Naive thymus-derived CD4-positive, alpha-beta T cell (primary cell): ENCODE measurements at regions of chr15 and their contacts with region 1.

Region 1: DNA sequence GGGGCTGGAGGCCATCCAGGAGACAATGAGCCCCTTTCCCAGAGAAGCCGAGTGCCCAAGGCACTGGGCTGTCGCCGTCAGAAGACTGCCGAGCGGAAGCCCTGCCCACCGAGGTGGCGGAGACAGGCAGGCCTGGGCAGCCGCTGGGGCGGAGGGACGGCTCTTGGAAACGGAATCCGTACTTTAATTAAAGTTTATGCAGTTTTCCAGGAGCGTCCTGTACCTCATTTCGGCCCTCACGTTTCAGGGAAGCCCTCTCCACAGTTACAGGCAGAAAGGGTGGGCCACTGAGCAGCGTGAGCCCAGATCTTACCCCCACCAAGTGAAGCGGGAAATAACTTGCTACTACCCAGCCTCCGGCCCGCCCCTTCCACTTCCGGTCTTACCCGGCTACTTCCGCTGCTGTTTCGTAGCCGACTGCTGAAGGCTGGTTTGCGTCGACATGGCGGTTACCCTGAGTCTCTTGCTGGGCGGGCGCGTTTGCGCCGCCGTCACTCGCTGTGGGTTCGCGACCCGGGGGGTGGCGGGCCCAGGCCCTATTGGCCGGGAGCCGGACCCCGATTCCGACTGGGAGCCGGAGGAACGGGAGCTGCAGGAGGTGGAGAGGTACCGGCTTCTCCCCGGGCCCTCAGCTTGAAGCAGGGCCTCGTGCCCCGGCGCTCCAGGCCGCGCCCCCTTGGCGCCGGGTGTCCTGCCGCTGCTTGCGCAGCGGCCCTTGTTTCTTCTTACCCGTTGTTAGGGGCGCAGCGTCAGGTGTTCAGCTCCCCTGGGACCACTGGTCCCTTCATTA is at the start of gene NGRN:
- DNase-seq: peak; percentile 81 to 96 (median 93)
- ATAC-seq: peak; percentile 94
- H3K4me3 ChIP-seq: peak within 1 kb of the TSS; percentile 84
- H3K4me3 Mint-ChIP-seq: peak within 1 kb of the TSS; percentile 95 to 99 (median 97)
- H3K27ac ChIP-seq: peak within 1 kb of the TSS; percentile 96
- H3K27ac Mint-ChIP-seq: peak within 1 kb of the TSS; percentile 98 to 100 (median 99)
- H3K4me1 ChIP-seq: peaks cover 36 to 40% of the 10 kb centered on the region in 2 donors
- H3K4me1 Mint-ChIP-seq: peaks cover 22 to 60% (median 48%) of the 10 kb centered on the region in 7 donors
- H3K27me3 ChIP-seq: no peaks in the 10 kb centered on the region
- H3K27me3 Mint-ChIP-seq: no peaks in the 10 kb centered on the region
- total RNA-seq, gene NGRN: 34.1 to 51.5 (median 48.4) TPM

Region 2: DNA sequence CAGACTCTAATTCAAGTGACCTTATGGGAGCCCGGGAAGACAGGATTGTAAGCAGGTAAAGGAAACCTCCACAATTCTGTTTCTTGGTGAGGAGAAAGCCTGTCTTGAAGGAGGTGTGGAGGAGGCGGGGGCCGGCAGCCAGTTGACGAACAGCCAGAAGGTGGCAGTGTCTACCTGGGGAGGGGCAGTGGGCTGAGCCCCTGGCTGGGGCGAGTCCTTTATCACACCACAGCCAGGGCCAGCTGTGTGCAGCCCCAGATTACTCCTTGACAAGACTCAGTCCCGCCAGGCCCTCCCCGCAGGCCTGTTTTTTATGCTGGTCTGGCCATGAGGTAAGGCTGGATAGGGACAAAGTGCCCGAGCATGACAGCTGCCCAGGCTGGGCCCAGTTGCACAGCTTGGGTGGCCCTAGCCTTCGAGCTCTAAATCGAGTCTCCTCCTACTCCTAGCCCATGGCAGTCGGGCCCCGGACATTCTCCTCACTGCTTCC is 122.3 kb before region 1 on chr15:
- CTCF ChIA-PET with region 1: no interaction called
- POLR2A ChIA-PET with region 1: no interaction called
- intact Hi-C with region 1: loop called in 1 of 2 experiments (anchors 2 kb)
- DNase-seq: peak; percentile 50 to 67 (median 58)
- ATAC-seq: peak; percentile 88
- H3K4me3 ChIP-seq: peak overlapping the region; percentile 9
- H3K4me3 Mint-ChIP-seq: peak overlapping the region; percentile 49 to 77 (median 67)
- H3K27ac ChIP-seq: no peak overlapping the region
- H3K27ac Mint-ChIP-seq: peak overlapping the region in 8 of 9 donors; percentile 37 to 92 (median 79)
- H3K4me1 ChIP-seq: peaks cover 0 to 4% of the 10 kb centered on the region in 2 donors
- H3K4me1 Mint-ChIP-seq: peaks cover 6 to 36% (median 26%) of the 10 kb centered on the region in 7 donors
- H3K27me3 ChIP-seq: no peaks in the 10 kb centered on the region
- H3K27me3 Mint-ChIP-seq: peaks cover 0 to 2% (median 0%) of the 10 kb centered on the region in 5 donors

Region 3: DNA sequence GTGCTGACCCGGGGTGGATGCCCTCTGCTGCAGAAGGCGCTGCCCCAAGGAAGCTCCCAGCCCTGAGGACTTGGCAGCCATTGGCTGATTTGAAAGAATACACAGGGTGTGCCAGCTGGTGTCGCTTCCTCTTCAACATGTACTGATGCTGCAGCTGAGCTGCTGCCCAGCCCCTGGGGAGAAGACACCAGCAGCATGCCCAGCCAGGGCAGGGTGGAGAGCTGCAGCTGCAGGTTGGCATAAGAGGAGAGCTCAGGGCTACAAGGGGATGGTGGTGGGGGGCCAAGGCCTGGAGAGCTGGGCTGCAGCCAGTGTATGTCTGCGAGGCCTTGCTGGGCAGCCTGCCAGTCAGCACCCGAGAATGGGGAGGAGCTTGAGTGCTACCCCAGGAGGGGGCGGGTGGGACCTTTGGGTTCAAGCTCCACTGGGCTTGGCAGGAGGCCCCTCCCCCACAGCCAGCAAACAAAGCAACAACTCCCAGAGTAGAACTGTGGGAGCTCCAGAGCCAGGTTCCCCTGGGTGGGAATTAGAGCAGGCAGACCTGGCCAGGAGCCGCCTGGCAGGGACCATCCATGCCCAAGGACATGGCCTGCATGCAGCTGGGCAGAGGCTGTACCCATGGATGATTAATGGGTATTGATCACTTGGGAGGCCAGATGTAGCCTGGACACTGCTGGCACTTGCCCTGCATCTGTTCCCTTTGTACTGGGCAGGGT is 73.5 kb before region 1 on chr15:
- CTCF ChIA-PET with region 1: interaction called, 5 read pairs
- POLR2A ChIA-PET with region 1: interaction called, 3 read pairs
- intact Hi-C with region 1: loop called in 1 of 2 experiments (anchors 2 kb)
- DNase-seq: peak; percentile 17 to 56 (median 53)
- ATAC-seq: peak; percentile 83
- H3K4me3 ChIP-seq: no peak overlapping the region
- H3K4me3 Mint-ChIP-seq: peak overlapping the region; percentile 78 to 88 (median 82)
- H3K27ac ChIP-seq: peak overlapping the region; percentile 9
- H3K27ac Mint-ChIP-seq: peak overlapping the region; percentile 75 to 95 (median 85)
- H3K4me1 ChIP-seq: peaks cover 7 to 21% of the 10 kb centered on the region in 2 donors
- H3K4me1 Mint-ChIP-seq: peaks cover 22 to 54% (median 31%) of the 10 kb centered on the region in 7 donors
- H3K27me3 ChIP-seq: no peaks in the 10 kb centered on the region
- H3K27me3 Mint-ChIP-seq: no peaks in the 10 kb centered on the region

Region 4: GRCh38 chr15:90201130-90201949 is 64.1 kb before region 1 on chr15 and contains the start of gene SEMA4B:
- CTCF ChIA-PET with region 1: no interaction called
- POLR2A ChIA-PET with region 1: interaction called, 14 read pairs
- intact Hi-C with region 1: loop called in 1 of 2 experiments (anchors 1 kb)
- DNase-seq: peak; percentile 56 to 81 (median 70)
- ATAC-seq: peak; percentile 92
- H3K4me3 ChIP-seq: peak within 1 kb of the TSS; percentile 67
- H3K4me3 Mint-ChIP-seq: peak within 1 kb of the TSS; percentile 84 to 96 (median 89)
- H3K27ac ChIP-seq: peak within 1 kb of the TSS; percentile 85
- H3K27ac Mint-ChIP-seq: peak within 1 kb of the TSS; percentile 66 to 90 (median 82)
- H3K4me1 ChIP-seq: peaks cover 11 to 23% of the 10 kb centered on the region in 2 donors
- H3K4me1 Mint-ChIP-seq: peaks cover 21 to 36% (median 25%) of the 10 kb centered on the region in 7 donors
- H3K27me3 ChIP-seq: no peaks in the 10 kb centered on the region
- H3K27me3 Mint-ChIP-seq: peaks cover 0 to 3% (median 0%) of the 10 kb centered on the region in 5 donors
- total RNA-seq, gene SEMA4B: 15.9 to 31.0 (median 20.7) TPM

Region 5: DNA sequence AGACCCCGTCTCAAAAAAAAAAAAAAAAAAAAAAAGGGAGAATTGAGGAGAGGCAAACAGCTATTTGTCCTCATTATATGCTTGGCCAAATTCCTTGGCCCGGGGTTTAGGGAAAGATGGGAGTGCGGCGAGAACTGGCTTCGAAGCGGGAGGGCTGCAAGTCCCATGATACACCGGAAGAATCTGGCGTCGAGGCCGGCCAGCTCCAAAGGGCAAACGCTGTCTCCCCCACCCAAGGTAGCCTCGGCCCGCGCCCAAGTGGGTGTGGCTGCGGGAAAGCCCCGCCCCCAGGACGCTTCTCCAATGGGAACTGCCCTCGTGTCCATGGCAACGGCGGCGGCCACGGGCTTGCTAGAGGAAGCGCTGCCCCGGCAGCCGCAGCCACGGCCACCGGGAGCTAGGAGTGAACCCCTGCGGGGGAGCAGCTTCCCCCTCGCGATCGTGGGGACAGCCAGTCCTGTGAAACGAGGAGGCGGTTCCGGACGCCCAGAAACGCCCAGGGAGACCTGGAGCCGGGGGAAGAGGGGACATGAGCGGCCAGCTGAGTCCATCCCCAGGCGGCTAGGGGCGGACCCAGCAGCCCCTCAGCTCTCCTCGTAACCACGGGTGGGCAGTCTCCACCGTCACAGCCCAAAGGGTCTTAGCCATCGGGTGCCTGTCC is 16.1 kb before region 1 on chr15 and contains the start of gene TTLL13:
- CTCF ChIA-PET with region 1: no interaction called
- POLR2A ChIA-PET with region 1: interaction called, 8 read pairs
- intact Hi-C with region 1: loop called (anchors 1 kb)
- DNase-seq: peak in 8 of 9 donors; percentile 29 to 89 (median 54)
- ATAC-seq: peak; percentile 90
- H3K4me3 ChIP-seq: peak within 1 kb of the TSS; percentile 54
- H3K4me3 Mint-ChIP-seq: peak within 1 kb of the TSS; percentile 64 to 88 (median 80)
- H3K27ac ChIP-seq: peak within 1 kb of the TSS; percentile 51
- H3K27ac Mint-ChIP-seq: peak within 1 kb of the TSS in 7 of 9 donors; percentile 23 to 90 (median 78)
- H3K4me1 ChIP-seq: no peaks in the 10 kb centered on the region
- H3K4me1 Mint-ChIP-seq: peaks cover 10 to 23% (median 16%) of the 10 kb centered on the region in 7 donors
- H3K27me3 ChIP-seq: no peaks in the 10 kb centered on the region
- H3K27me3 Mint-ChIP-seq: peaks cover 0 to 3% (median 0%) of the 10 kb centered on the region in 5 donors
- total RNA-seq, gene TTLL13: 0.40 to 1.8 (median 0.63) TPM in 4 of 5 experiments, not detected in the other